A549 (cell line): ENCODE measurements at regions of chr17 and their contacts with region 1.

Region 1: DNA sequence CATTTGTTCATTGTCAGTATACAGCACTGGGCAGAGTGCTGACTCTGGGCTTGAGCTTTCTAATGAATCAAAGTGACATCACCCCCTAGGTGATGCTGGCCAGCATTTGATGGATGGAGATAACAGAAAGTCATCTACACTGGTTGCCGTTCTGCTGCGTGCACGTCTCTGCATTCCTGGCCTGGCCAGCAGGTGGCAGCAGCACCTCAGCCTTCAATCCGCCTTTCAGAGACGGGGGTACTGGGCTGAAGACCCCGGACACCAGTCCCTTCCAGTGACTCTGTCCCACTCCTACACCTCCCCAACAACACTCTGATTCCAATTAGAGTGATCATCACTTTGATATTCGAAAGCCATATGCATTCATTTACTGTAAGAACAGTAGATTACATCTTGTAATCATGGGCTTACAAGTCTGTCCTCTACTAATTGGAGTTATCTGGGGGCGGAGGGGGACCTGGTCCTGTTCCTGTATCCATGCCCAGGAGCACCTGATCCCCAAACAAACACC is 6.0 kb downstream of the CPSF4L start:
- DNase-seq: peak; percentile 62 to 74
- ATAC-seq: peak; percentile 82 to 90
- H3K4me3 ChIP-seq: no peak overlapping the region
- H3K27ac ChIP-seq: peak overlapping the region in 1 of 2 experiments; percentile 11; a peak in 1 of 6 replicates
- H3K4me1 ChIP-seq: no peaks in the 10 kb centered on the region
- CTCF ChIP-seq: peak; percentile 100
- EP300 ChIP-seq: no peak
- POLR2A ChIP-seq: no peak
- RAD21 ChIP-seq: peak; percentile 100

Region 2: GRCh38 chr17:73052923-73053322 is 202.8 kb before region 1 on chr17:
- CTCF ChIA-PET with region 1: no interaction called
- POLR2A ChIA-PET with region 1: no interaction called
- DNase-seq: no peak
- ATAC-seq: no peak
- H3K4me3 ChIP-seq: no peak overlapping the region
- H3K27ac ChIP-seq: no peak overlapping the region
- H3K4me1 ChIP-seq: peaks cover under 1% of the 10 kb centered on the region; the same call in 1 of the 3 replicates
- CTCF ChIP-seq: no peak
- EP300 ChIP-seq: no peak
- POLR2A ChIP-seq: no peak
- RAD21 ChIP-seq: no peak

Region 3: DNA sequence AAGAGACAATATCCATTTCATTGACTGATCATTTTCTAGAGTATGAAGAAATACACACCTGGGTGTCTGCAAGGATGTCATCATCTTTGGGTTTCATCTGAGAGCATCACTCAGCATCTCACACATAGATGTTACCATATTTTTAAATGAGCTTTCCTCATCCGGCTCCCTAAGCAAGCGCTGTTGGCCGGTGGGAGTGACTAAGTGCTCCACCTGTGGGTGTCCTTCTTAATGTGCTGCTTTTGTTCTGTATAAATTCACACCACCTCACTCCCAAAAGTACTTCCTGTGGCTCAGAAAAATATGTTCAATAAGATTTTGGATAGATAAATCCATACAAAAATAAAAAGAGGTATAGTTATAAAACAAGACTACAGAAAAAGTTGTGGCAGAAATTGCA is 83.5 kb before region 1 on chr17:
- CTCF ChIA-PET with region 1: no interaction called
- POLR2A ChIA-PET with region 1: no interaction called
- DNase-seq: no peak
- ATAC-seq: no peak
- H3K4me3 ChIP-seq: no peak overlapping the region
- H3K27ac ChIP-seq: no peak overlapping the region
- H3K4me1 ChIP-seq: no peaks in the 10 kb centered on the region
- CTCF ChIP-seq: no peak
- EP300 ChIP-seq: no peak
- POLR2A ChIP-seq: no peak
- RAD21 ChIP-seq: no peak

Region 4: GRCh38 chr17:73240561-73240960 is 15.2 kb before region 1 on chr17:
- CTCF ChIA-PET with region 1: interaction called, 46 read pairs
- POLR2A ChIA-PET with region 1: no interaction called
- DNase-seq: no peak
- ATAC-seq: no peak
- H3K4me3 ChIP-seq: no peak overlapping the region
- H3K27ac ChIP-seq: no peak overlapping the region
- H3K4me1 ChIP-seq: no peaks in the 10 kb centered on the region
- CTCF ChIP-seq: no peak
- EP300 ChIP-seq: no peak
- POLR2A ChIP-seq: no peak
- RAD21 ChIP-seq: no peak

Region 5: GRCh38 chr17:73291260-73291801 is 35.6 kb after region 1 on chr17:
- CTCF ChIA-PET with region 1: interaction called, 72 read pairs
- POLR2A ChIA-PET with region 1: no interaction called
- DNase-seq: peak; percentile 59 to 65
- ATAC-seq: peak; percentile 47 to 65; a peak in 5 of 6 replicates
- H3K4me3 ChIP-seq: 0 out of 3 replicates have a peak overlapping the region, but pooled peaks have one; percentile 6
- H3K27ac ChIP-seq: peak overlapping the region; percentile 82 to 91
- H3K4me1 ChIP-seq: peaks cover 87% of the 10 kb centered on the region
- CTCF ChIP-seq: no peak
- EP300 ChIP-seq: no peak
- POLR2A ChIP-seq: no peak
- RAD21 ChIP-seq: no peak

Region 6: DNA sequence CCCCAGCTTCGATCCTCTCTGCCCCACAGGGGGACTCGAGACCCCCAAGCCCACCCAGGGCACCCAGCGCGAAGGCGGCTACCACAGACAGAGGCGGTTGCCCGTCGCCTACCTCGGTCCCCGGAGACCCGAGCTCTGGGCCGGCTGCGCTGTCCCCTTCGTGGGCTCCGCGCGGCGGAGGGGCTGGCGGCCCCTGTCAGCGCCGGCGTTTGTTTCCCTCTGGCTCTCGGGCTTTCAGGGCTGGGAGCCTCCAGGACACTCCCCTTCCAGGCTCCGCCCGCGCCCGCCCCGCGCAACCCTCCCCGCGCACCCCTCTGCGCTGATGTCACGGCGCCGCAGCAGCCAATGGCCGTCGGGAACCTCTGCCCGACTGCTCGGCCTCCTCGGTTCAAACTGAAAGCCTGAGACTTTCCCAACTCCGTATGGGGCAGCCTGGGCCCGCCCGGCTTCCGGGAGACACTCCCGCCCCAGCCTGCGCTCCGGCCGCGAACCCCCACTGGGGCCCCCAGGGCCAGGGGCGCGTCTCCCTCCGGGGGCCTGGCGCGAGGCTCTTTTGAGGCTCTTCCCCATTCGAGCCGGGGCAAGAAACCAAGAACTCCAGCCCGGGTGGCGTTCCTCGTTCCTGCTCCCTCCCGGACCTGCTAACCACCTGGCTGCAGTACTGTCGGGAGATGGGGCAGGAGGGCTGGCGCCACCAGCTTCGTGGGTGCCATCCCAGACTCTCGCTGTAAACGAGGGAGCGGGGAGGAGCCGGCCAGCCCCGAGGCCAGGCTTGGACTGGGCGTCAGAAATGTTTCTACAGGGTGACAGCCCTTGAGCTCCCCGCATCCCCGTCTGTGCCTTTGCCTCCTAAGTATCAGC is 56.3 kb after region 1 on chr17 and contains the start of gene CDC42EP4:
- CTCF ChIA-PET with region 1: interaction called, 77 read pairs
- POLR2A ChIA-PET with region 1: interaction called, 4 read pairs
- DNase-seq: peak; percentile 94 to 96
- ATAC-seq: peak; percentile 75 to 88
- H3K4me3 ChIP-seq: peak within 1 kb of the TSS; percentile 77
- H3K27ac ChIP-seq: peak within 1 kb of the TSS; percentile 95 to 96
- H3K4me1 ChIP-seq: peaks cover 32% of the 10 kb centered on the region
- CTCF ChIP-seq: no peak
- EP300 ChIP-seq: peak in 1 of 2 experiments; percentile 28; a peak in 1 of 5 replicates
- POLR2A ChIP-seq: peak; percentile 63
- RAD21 ChIP-seq: peak in 1 of 2 experiments; percentile 39; a peak in 3 of 5 replicates
- polyA plus RNA-seq, gene CDC42EP4: 32.9 and 33.8 TPM in 2 replicates

Region 7: DNA sequence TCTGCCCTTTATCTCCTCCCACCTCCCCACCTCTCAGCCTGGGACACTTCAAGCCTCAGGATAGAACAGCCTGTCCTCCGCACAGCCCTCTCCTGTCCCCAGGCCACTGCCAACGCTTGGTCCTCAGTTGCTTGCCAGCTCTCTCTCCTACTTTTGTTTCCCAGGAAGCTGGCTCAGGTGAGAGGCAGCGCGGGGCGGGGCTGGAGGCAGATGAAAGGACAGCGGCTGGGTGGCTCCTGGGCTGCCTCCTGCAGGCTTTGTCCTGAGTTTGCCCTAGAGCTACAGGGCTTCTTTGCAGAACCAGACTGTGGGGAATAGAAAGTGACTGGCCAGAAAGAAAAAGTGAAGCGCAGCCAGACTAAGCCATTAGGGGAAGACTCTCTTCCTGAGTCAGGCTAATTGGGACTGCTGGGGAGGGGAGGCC is 104.3 kb after region 1 on chr17:
- CTCF ChIA-PET with region 1: interaction called, 975 read pairs
- POLR2A ChIA-PET with region 1: no interaction called
- DNase-seq: no peak
- ATAC-seq: peak; percentile 16 to 18; a peak in 3 of 6 replicates
- H3K4me3 ChIP-seq: no peak overlapping the region
- H3K27ac ChIP-seq: peak overlapping the region in 1 of 2 experiments; percentile 1; a peak in 4 of 6 replicates
- H3K4me1 ChIP-seq: peaks cover 28% of the 10 kb centered on the region
- CTCF ChIP-seq: no peak
- EP300 ChIP-seq: no peak
- POLR2A ChIP-seq: no peak
- RAD21 ChIP-seq: no peak

Region 8: DNA sequence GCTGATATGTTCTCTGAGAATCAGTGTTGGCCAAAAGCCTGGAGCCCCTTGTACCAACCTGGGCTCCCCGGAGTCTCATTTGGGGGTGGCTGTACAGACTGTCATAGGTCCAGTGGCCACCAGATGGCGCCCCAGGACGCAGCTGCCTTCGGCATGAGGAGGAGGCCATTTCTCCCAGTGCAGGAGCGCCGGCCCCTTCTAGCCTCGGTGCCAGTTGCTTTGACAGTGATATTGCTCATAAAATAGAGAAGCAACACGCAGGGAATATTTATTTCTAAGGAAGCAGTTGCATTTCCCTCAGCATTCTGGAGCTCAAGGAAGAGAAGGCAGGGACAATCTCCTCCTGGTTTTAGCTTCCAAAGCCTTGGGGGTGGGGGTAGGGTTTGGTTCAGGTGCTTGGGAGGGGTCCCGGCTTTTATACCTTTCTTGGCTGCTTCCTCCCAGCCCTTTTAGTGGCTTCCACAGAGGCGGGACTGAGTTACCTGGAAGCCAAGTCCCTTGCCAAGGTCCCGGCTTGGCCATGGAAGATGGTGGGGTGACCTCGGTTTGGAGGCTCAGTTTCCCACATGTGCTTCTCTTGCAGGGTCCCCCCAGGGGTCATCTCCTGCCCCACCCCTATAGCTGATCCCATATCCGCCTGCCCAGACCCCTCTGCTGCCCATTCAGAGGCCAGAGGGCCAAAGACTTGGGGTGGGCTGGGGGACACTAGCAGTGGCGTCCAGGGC is 173.9 kb after region 1 on chr17:
- CTCF ChIA-PET with region 1: interaction called, 10 read pairs
- POLR2A ChIA-PET with region 1: no interaction called
- DNase-seq: peak; percentile 77 to 97
- ATAC-seq: peak; percentile 87 to 97
- H3K4me3 ChIP-seq: no peak overlapping the region
- H3K27ac ChIP-seq: no peak overlapping the region
- H3K4me1 ChIP-seq: peaks cover 3% of the 10 kb centered on the region; the same call in 1 of the 3 replicates
- CTCF ChIP-seq: peak; percentile 98
- EP300 ChIP-seq: no peak
- POLR2A ChIP-seq: no peak
- RAD21 ChIP-seq: peak; percentile 95 to 96

Region 9: DNA sequence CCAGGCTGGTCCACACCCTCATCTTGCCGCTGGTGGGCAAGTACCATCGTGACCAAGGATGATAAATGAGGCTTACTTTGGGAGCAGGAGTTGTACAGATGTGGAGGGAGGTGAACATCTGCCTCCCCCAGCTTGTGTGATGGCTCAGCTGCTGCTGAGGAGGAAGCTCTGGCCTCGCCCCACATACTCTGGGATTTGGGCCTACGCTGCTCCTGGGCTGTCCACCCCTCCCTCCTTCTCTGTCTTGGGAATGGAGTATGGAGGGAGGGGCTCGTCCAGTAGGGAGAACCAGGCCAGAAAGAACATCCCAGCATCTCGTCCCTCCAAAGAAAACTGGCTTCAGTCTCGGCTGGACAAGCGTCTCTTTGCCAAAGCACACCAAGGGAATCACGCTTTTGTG is 190.9 kb after region 1 on chr17:
- CTCF ChIA-PET with region 1: no interaction called
- POLR2A ChIA-PET with region 1: no interaction called
- DNase-seq: no peak
- ATAC-seq: peak; percentile 30; a peak in 5 of 6 replicates
- H3K4me3 ChIP-seq: no peak overlapping the region
- H3K27ac ChIP-seq: no peak overlapping the region
- H3K4me1 ChIP-seq: no peaks in the 10 kb centered on the region
- CTCF ChIP-seq: no peak
- EP300 ChIP-seq: no peak
- POLR2A ChIP-seq: no peak
- RAD21 ChIP-seq: no peak